ENCODE measurements at regions of chr2 and their contacts with region 1.

Region 1: DNA sequence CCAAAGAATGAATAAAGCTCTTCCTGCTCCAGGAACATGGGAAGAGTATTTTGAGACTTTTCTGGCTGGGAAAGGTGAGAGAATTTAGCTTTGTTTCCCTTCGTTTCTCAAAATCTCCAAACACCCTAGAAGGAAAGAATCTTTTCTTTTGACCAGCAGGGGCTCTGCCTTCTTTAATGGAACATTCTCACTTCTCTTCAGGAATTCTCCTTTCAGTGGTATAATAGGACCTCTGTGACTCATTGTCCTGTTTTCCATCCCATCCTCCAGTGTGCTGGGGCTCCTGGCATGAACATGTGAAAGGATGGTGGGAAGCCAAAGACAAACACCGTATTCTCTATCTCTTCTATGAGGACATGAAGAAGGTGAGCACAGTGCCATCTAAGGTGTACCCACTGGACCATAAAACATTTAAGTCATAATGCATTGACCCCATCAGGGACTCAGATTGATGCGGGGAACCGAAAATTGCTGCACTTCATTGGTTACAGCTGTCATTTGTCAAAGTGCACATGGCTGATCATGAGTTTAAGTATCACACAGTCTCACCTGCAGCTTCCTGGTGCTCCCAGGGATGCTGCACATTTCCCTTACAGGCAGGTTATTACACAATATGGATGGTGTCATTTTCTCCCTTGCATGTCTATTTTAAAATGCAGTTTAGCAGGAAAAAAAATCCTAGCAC is 5.5 kb downstream of the SULT1C4 start:
- DNase-seq: no peak
- ATAC-seq: no peak
- H3K4me3 ChIP-seq: no peak overlapping the region
- H3K27ac ChIP-seq: no peak overlapping the region
- H3K4me1 ChIP-seq: peaks cover 0 to 9% (median 0%) of the 10 kb centered on the region in 12 donors
- H3K27me3 ChIP-seq: no peaks in the 10 kb centered on the region
- CTCF ChIP-seq: no peak
- POLR2A ChIP-seq: no peak

Region 2: GRCh38 chr2:108448678-108449493 is 65.6 kb after region 1 on chr2 and contains the start of gene GCC2:
- intact Hi-C with region 1: loop called in 1 of 10 experiments (anchors 5 kb)
- DNase-seq: peak; percentile 94 to 97 (median 95)
- ATAC-seq: peak; percentile 99 to 100 (median 100)
- H3K4me3 ChIP-seq: peak within 1 kb of the TSS; percentile 65 to 99 (median 82)
- H3K27ac ChIP-seq: peak within 1 kb of the TSS; percentile 79 to 91 (median 85)
- H3K4me1 ChIP-seq: peaks cover 0 to 22% (median 9%) of the 10 kb centered on the region in 12 donors
- H3K27me3 ChIP-seq: no peaks in the 10 kb centered on the region
- CTCF ChIP-seq: no peak
- POLR2A ChIP-seq: peak in 1 of 2 donors; percentile 83
- total RNA-seq, gene GCC2: 11.9 to 39.5 (median 25.1) TPM

Measured in heart left ventricle (tissue), 16 donors.